ENCODE measurements at regions of chr7 and their contacts with region 1.

Region 1: GRCh38 chr7:142632291-142633134 is 116.8 kb upstream of the PRSS1 start:
- DNase-seq: peak; percentile 60
- ATAC-seq: peak; percentile 98
- H3K4me3 ChIP-seq: no peak overlapping the region
- H3K27ac ChIP-seq: no peak overlapping the region
- H3K4me1 ChIP-seq: peaks cover 3% of the 10 kb centered on the region
- H3K27me3 ChIP-seq: peaks cover 4% of the 10 kb centered on the region; the same call in 1 of the 2 replicates
- CTCF ChIP-seq: peak; percentile 73
- POLR2A ChIP-seq: no peak
- RAD21 ChIP-seq: peak; percentile 68

Region 2: DNA sequence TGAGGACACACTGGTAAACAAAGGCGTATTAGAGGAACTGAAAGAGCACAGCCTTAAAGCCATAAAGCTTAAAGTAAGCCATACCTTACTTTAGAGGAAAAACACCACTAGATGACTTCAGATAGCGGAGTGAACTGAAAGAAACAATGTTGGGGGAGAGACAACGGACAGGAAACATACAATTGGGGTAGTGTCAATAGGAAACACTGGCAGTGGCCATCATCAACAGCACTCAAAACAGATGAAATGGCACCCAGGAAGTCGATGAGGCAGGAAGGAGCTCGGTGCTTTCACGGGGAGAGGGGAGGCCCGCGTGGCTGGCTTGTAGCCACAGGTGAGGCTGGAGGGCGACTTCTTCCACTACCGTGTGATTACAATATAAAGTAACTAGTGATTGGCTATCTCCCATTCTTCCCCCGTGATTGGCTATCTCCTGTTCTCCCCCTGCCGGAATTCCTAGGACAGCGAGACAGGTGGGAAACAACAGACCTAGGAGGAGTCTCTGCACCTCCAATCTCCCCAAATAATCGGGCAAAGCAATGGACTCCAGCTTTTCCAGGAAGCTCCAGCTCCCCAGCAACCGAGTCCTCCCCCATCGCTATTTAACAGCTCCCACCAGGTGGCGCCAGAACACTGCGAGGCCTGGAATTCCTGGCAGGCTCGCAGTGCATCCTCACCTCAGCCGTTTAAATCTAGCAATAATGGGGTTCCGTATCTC is 656.5 kb before region 1 on chr7:
- CTCF ChIA-PET with region 1: no interaction called
- POLR2A ChIA-PET with region 1: no interaction called
- dilution Hi-C with region 1: no loop called
- in situ Hi-C with region 1: no loop called
- intact Hi-C with region 1: no loop called
- DNase-seq: no peak
- ATAC-seq: no peak
- H3K4me3 ChIP-seq: no peak overlapping the region
- H3K27ac ChIP-seq: no peak overlapping the region
- H3K4me1 ChIP-seq: no peaks in the 10 kb centered on the region
- H3K27me3 ChIP-seq: no peaks in the 10 kb centered on the region
- CTCF ChIP-seq: peak; percentile 30
- POLR2A ChIP-seq: no peak
- RAD21 ChIP-seq: peak; percentile 35

Region 3: DNA sequence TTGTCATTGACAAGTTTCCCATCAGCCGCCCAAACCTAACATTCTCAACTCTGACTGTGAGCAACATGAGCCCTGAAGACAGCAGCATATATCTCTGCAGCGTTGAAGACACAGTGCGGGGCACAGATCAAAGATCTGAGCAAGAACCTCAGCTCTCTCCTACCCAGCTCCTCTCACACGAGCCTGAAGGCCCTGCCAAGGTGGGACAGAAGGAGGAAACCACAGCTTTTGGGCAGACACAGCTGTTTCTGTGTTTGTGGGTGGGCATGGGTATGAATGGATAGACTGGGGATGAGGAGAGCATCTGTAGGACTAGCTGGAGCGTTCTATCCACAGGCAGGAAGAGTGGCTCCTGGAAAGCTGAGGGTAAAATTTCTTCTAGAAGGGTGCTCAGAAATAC is 108.3 kb after region 1 on chr7:
- CTCF ChIA-PET with region 1: no interaction called
- POLR2A ChIA-PET with region 1: no interaction called
- dilution Hi-C with region 1: no loop called
- in situ Hi-C with region 1: no loop called
- intact Hi-C with region 1: no loop called
- DNase-seq: no peak
- ATAC-seq: no peak
- H3K4me3 ChIP-seq: no peak overlapping the region
- H3K27ac ChIP-seq: no peak overlapping the region
- H3K4me1 ChIP-seq: no peaks in the 10 kb centered on the region
- H3K27me3 ChIP-seq: no peaks in the 10 kb centered on the region
- CTCF ChIP-seq: no peak
- POLR2A ChIP-seq: no peak
- RAD21 ChIP-seq: no peak

Region 4: GRCh38 chr7:142811154-142811737 is 178.7 kb after region 1 on chr7:
- CTCF ChIA-PET with region 1: interaction called, 5 read pairs
- POLR2A ChIA-PET with region 1: no interaction called
- dilution Hi-C with region 1: no loop called
- in situ Hi-C with region 1: no loop called
- intact Hi-C with region 1: loop called (anchors 1 kb)
- DNase-seq: peak; percentile 54
- ATAC-seq: peak; percentile 84
- H3K4me3 ChIP-seq: no peak overlapping the region
- H3K27ac ChIP-seq: no peak overlapping the region
- H3K4me1 ChIP-seq: no peaks in the 10 kb centered on the region
- H3K27me3 ChIP-seq: peaks cover 2% of the 10 kb centered on the region; the same call in 1 of the 2 replicates
- CTCF ChIP-seq: peak; percentile 71
- POLR2A ChIP-seq: no peak
- RAD21 ChIP-seq: peak; percentile 60